Mammary epithelial cell (primary cell): ENCODE measurements at regions of chr15 and their contacts with region 1.

Region 1: DNA sequence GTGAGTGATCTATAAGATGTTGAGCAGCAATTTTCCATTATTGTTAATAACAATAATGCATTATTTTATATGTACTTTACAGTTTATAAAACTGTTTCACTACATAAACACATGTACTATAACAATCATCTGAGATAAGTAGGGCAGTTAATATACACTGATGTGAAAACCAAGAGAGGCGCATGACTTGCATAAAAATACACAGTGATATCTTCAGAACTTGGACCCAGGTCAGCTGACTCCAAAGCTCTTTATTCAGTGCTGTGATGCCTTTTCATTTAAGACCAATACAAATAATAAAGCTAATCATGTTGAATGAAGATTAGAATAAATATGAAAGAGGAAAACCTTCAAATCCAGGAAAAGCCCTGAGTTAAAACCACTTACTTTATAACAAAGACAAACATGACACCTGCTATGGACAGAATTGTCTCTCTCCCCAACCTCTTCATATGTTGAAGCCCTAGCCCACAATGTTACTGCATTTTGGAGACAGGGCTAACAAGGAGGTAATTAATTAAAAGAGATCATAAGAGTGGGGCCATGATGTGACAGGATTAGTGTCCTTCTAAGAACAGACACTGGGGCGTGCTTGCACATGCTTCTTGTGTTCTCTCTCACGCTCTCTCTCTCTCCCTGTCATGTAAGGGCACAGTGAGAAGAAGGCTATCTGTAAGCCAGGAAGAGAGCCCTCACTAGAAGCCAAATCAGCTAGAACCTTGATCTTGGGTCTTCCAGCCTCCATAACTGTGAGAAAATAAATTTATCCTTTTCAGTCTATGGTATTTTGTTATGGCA is 55.8 kb upstream of the TSPAN3 start:
- DNase-seq: peak; percentile 8
- H3K4me3 ChIP-seq: no peak overlapping the region
- H3K27ac ChIP-seq: no peak overlapping the region
- H3K4me1 ChIP-seq: no peaks in the 10 kb centered on the region
- H3K27me3 ChIP-seq: no peaks in the 10 kb centered on the region
- CTCF ChIP-seq: no peak

Region 2: DNA sequence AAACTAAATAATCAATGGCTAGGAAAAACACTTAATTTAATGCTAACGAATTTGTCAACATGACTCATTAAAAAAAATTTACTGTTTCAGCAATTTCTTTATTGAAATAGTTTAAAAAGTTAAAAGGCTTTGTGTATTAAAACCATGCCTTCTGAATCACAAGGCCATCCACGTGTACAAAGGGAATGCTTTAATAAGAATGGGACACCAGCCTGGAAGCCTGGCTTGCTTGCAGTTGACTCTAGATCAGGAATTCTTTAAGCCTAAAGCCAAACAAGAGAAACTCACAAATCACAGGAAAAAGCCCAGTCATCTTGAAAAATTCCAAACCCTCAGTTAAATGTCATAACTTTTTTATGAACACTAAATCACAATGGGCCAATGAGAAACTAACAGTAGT is 155.6 kb after region 1 on chr15:
- CTCF ChIA-PET with region 1: no interaction called
- dilution Hi-C with region 1: no loop called
- in situ Hi-C with region 1: no loop called
- intact Hi-C with region 1: no loop called
- DNase-seq: no peak
- H3K4me3 ChIP-seq: no peak overlapping the region
- H3K27ac ChIP-seq: no peak overlapping the region
- H3K4me1 ChIP-seq: no peaks in the 10 kb centered on the region
- H3K27me3 ChIP-seq: no peaks in the 10 kb centered on the region
- CTCF ChIP-seq: no peak

Region 3: DNA sequence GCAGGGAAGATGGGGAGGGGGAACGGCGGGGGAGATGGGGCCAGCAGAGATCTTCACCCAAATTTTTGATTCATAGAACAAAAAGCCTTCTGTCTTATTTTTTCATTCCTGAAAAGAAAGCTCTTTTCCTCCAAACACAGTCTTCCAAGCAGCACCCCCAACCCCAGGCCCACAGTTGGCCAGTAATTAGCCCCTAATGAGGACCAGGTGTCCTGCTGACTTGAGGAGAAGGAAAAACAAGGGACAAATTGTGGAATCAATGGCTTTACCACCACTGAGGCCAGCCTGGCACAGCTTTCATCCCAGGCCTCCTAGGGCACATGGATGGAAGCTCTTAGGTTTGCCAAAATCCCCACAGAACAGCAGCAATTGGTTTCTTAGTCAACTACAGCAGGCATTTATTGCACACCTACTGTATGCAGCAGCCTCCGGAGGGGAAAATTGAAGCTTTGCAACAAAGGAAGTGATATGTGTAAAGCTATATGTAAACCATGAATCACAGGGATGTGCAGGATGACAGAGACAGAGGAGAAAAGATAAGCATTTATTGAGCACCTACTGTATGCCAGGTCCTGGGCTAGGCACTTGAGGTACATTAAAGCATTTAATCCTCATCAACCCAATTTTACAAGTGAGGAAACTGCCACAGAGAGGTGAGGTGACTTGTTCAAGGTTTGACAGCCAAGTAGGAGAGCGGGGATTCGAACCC is 751.3 kb after region 1 on chr15:
- CTCF ChIA-PET with region 1: no interaction called
- dilution Hi-C with region 1: no loop called
- in situ Hi-C with region 1: no loop called
- intact Hi-C with region 1: loop called (anchors 5 kb)
- DNase-seq: no peak
- H3K4me3 ChIP-seq: no peak overlapping the region
- H3K27ac ChIP-seq: no peak overlapping the region
- H3K4me1 ChIP-seq: no peaks in the 10 kb centered on the region
- H3K27me3 ChIP-seq: peaks cover 2% of the 10 kb centered on the region
- CTCF ChIP-seq: no peak